ENCODE measurements at regions of chr6 and their contacts with region 1.

Region 1: DNA sequence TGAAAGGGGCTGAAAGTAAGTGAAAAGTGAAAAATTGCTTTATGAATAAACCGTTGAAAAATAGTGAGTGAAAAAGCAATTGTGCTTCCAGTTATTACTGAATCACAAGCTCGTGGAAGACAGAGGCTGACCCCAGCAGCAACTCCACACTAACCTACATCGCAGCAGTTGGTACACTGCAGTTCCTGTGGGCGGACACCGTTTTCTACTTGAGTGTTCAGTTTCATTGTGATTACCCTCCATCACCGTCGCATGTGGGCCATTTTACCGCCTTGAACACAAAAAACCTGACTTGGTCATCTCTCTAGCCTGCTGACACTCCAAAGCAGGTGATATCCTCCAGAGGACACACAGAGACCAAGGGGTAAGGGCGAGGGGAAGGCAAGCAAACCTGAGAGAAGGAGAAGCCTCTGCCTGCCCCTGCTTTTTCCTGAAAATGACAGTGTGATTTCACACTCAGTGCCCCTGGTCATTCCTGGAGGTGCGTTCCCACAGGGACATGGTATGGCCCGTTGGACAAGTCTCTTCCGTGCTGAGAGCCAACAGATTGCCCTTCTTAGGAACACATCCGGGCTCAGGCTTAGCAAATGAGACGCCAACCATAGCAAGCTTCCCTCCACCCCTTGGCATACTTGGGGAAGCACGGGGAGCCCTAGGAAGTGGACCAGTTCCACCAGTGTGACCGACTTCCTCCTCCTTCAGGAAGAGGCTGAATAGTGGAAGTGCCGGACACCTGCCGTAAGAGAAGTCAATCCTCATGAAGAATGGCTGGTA is 28.5 kb downstream of the PRDM1 start:
- DNase-seq: peak; percentile 92
- H3K4me3 Mint-ChIP-seq: peak overlapping the region; percentile 25
- H3K27ac Mint-ChIP-seq: peak overlapping the region; percentile 75
- H3K4me1 Mint-ChIP-seq: peaks cover 92% of the 10 kb centered on the region
- H3K27me3 Mint-ChIP-seq: peaks cover 8% of the 10 kb centered on the region

Region 2: GRCh38 chr6:106037060-106037459 is 77.6 kb before region 1 on chr6:
- CTCF ChIA-PET with region 1: no interaction called
- POLR2A ChIA-PET with region 1: no interaction called
- intact Hi-C with region 1: no loop called
- DNase-seq: no peak
- H3K4me3 Mint-ChIP-seq: no peak overlapping the region
- H3K27ac Mint-ChIP-seq: peak overlapping the region; percentile 49
- H3K4me1 Mint-ChIP-seq: peaks cover 18% of the 10 kb centered on the region
- H3K27me3 Mint-ChIP-seq: no peaks in the 10 kb centered on the region

Region 3: GRCh38 chr6:106125925-106126435 is 11.3 kb after region 1 on chr6:
- CTCF ChIA-PET with region 1: no interaction called
- POLR2A ChIA-PET with region 1: interaction called, 8 read pairs
- intact Hi-C with region 1: loop called (anchors 1 kb)
- DNase-seq: peak; percentile 88
- H3K4me3 Mint-ChIP-seq: peak overlapping the region; percentile 65
- H3K27ac Mint-ChIP-seq: peak overlapping the region; percentile 80
- H3K4me1 Mint-ChIP-seq: peaks cover 44% of the 10 kb centered on the region
- H3K27me3 Mint-ChIP-seq: peaks cover 3% of the 10 kb centered on the region

Region 4: GRCh38 chr6:106141441-106142237 is 27.0 kb after region 1 on chr6:
- CTCF ChIA-PET with region 1: interaction called, 7 read pairs
- POLR2A ChIA-PET with region 1: interaction called, 7 read pairs
- intact Hi-C with region 1: loop called (anchors 1 kb)
- DNase-seq: peak; percentile 80
- H3K4me3 Mint-ChIP-seq: peak overlapping the region; percentile 10
- H3K27ac Mint-ChIP-seq: peak overlapping the region; percentile 83
- H3K4me1 Mint-ChIP-seq: peaks cover 49% of the 10 kb centered on the region
- H3K27me3 Mint-ChIP-seq: no peaks in the 10 kb centered on the region

Region 5: GRCh38 chr6:106181664-106182418 is 67.2 kb after region 1 on chr6:
- CTCF ChIA-PET with region 1: interaction called, 6 read pairs
- POLR2A ChIA-PET with region 1: interaction called, 20 read pairs
- intact Hi-C with region 1: loop called (anchors 1 kb)
- DNase-seq: no peak
- H3K4me3 Mint-ChIP-seq: no peak overlapping the region
- H3K27ac Mint-ChIP-seq: peak overlapping the region; percentile 46
- H3K4me1 Mint-ChIP-seq: peaks cover 60% of the 10 kb centered on the region
- H3K27me3 Mint-ChIP-seq: no peaks in the 10 kb centered on the region